HepG2 (cell line): ENCODE measurements at regions of chr7 and their contacts with region 1.

Region 1: GRCh38 chr7:130896898-130897514 is 163.0 kb upstream of the KLF14 start:
- DNase-seq: peak; percentile 52
- ATAC-seq: peak; percentile 49
- H3K4me3 ChIP-seq: no peak overlapping the region
- H3K27ac ChIP-seq: peak overlapping the region; percentile 15
- H3K4me1 ChIP-seq: peaks cover 95% of the 10 kb centered on the region
- H3K27me3 ChIP-seq: no peaks in the 10 kb centered on the region
- CTCF ChIP-seq: peak; percentile 88
- EP300 ChIP-seq: no peak
- POLR2A ChIP-seq: no peak
- RAD21 ChIP-seq: peak; percentile 92

Region 2: DNA sequence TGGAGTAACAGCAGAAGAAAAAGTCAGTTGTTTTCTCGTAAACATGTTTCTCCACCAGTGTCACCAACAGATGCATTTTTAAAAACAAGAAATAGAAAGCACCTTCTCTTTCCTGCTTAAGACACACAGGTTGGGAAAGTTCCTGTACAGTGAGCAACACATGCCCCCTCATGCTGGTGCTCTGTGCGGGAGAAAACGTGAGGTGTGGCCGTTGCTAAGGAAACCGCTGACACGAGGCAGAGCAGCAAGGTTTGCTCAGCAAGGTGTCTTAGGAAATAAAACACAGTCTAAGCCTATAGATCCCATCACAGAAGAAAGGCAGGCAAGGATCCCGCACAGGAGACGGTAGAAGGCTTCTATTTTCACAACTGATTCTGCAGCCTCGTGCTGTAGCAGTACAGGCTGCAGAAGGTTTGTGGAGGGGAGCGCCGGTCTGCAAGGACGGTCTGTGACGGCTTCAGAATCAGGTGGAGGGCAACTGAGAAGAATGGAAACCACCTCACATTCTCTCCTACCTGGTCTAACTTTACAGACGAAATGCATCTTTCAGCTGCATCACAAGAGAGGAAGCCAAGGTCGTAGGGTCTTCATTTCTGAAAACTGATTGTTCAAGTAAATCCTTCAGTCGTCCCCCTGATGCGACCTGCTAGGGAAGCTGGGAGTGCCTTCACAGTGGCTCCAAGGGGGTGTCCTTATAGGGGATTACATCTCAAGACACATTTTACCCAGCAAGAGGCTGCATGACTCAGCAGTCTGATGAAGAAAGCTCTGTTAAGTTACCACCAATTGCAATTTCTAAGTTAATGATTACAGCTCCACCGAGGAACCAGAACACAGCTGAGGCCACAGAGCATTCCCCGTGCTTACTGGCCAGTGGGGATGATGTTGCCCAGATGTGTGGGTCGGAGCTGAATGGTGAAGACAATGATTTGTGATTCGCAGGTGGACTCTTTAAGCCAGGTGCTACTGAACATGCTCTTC is 12.3 kb before region 1 on chr7:
- CTCF ChIA-PET with region 1: no interaction called
- POLR2A ChIA-PET with region 1: interaction called, 11 read pairs
- in situ Hi-C with region 1: no loop called
- intact Hi-C with region 1: no loop called
- DNase-seq: peak; percentile 55
- ATAC-seq: peak; percentile 82
- H3K4me3 ChIP-seq: no peak overlapping the region
- H3K27ac ChIP-seq: peak overlapping the region; percentile 60
- H3K4me1 ChIP-seq: peaks cover 81% of the 10 kb centered on the region
- H3K27me3 ChIP-seq: no peaks in the 10 kb centered on the region
- CTCF ChIP-seq: no peak
- EP300 ChIP-seq: 0 out of 4 replicates have a peak, but pooled peaks of 1 of the 2 experiments have one; percentile 23
- POLR2A ChIP-seq: peak; percentile 42 to 56; a peak in 3 of 4 replicates
- RAD21 ChIP-seq: no peak

Region 3: DNA sequence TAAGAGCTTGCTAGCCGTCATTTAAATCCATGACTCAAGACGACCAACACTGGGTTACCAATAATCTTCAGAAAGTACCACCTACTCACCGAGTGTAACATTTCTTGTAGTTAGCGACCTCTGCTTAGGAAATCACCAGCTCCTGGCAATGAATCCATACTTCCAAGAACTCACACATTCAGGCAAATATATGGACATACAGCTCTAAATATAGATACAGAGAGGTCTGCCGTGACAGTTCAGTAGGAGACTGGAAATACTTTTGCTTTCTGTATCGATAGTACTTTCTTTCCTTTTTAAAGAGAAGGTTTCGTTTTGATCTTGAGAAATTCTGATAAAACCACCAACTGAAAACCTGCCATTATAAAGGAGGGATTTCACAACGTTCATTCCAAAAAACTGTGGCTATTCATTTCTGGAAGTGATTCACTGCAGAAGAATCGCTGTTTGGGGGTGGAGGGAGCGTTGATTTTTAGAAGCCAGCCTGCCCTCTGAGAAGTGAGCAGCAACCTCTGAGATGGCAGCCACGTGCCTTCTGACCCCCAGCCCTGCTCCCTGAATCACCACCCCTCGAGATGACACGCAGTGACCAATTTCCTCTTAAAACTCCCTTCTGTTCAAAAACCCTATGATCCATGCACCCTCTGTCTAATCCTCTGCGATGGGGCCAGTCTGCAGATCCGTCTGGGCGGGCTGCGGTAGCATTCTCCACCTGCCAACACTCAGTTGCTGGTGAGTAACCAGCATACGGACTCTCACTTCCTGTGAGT is 16.0 kb after region 1 on chr7:
- CTCF ChIA-PET with region 1: interaction called, 3 read pairs
- POLR2A ChIA-PET with region 1: interaction called, 5 read pairs
- in situ Hi-C with region 1: no loop called
- intact Hi-C with region 1: loop called (anchors 2 kb)
- DNase-seq: peak; percentile 71
- ATAC-seq: peak; percentile 62
- H3K4me3 ChIP-seq: peak overlapping the region; percentile 54 to 72 (median 67)
- H3K27ac ChIP-seq: peak overlapping the region; percentile 94
- H3K4me1 ChIP-seq: peaks cover 93% of the 10 kb centered on the region
- H3K27me3 ChIP-seq: no peaks in the 10 kb centered on the region
- CTCF ChIP-seq: no peak
- EP300 ChIP-seq: peak in 1 of 2 experiments; percentile 36; a peak in 2 of 4 replicates
- POLR2A ChIP-seq: peak; percentile 43 to 59
- RAD21 ChIP-seq: 0 out of 2 replicates have a peak, but pooled peaks have one; percentile 12

Region 4: GRCh38 chr7:130921391-130922180 is 24.6 kb after region 1 on chr7:
- CTCF ChIA-PET with region 1: no interaction called
- POLR2A ChIA-PET with region 1: interaction called, 11 read pairs
- in situ Hi-C with region 1: no loop called
- intact Hi-C with region 1: no loop called
- DNase-seq: no peak
- ATAC-seq: no peak
- H3K4me3 ChIP-seq: peak overlapping the region in 1 of 3 experiments; percentile 21; a peak in 1 of 6 replicates
- H3K27ac ChIP-seq: peak overlapping the region; percentile 78
- H3K4me1 ChIP-seq: peaks cover 95% of the 10 kb centered on the region
- H3K27me3 ChIP-seq: no peaks in the 10 kb centered on the region
- CTCF ChIP-seq: no peak
- EP300 ChIP-seq: no peak
- POLR2A ChIP-seq: no peak
- RAD21 ChIP-seq: no peak

Region 5: DNA sequence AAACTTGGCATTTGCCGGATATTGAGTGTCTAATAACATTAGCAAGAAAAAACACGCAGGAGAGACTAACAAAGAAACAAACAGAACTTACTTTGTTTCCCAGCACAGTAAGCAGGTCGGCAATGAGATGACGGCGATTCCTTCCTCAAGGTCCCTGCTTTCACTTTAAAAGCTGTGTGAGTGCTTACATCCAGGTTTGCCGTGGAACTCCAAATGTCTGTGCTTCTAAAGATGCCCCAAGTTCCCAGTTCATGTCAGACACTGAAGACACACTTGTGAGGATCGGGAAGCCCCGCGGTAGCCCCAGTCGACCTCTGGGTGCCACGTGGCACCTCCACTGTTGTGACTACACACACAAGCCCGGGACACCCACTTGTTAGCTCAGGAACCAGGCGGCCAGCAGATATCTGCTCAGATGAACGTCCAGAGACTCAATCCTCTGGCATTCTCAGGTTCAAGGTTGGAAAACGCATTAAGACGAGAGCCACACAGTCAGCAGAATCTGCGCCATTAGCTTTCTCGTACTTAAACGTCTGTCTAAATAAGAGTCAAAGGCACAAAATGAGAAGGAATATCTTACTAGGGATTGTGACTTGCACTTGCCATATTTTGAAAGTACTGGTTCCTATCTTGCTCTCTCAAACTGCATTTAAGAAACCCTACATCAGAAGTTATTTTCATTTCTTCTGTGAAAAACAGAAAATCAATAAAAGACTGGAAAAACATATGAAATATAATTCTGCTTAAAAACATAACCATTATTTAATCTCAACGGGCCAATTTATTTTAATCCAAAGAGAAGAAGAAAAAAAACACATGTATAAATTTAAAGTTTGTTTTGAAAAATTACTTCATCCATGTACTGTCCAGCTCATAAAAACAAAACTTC is 44.6 kb after region 1 on chr7:
- CTCF ChIA-PET with region 1: no interaction called
- POLR2A ChIA-PET with region 1: interaction called, 7 read pairs
- in situ Hi-C with region 1: no loop called
- intact Hi-C with region 1: loop called (anchors 1 kb)
- DNase-seq: peak; percentile 75
- ATAC-seq: peak; percentile 91
- H3K4me3 ChIP-seq: peak overlapping the region; percentile 51 to 69 (median 68)
- H3K27ac ChIP-seq: peak overlapping the region; percentile 90
- H3K4me1 ChIP-seq: peaks cover 81% of the 10 kb centered on the region
- H3K27me3 ChIP-seq: no peaks in the 10 kb centered on the region
- CTCF ChIP-seq: no peak
- EP300 ChIP-seq: no peak; a peak in 1 of 4 replicates
- POLR2A ChIP-seq: peak; percentile 40 to 69; a peak in 3 of 4 replicates
- RAD21 ChIP-seq: no peak; the same call in 1 of the 2 replicates

Region 6: DNA sequence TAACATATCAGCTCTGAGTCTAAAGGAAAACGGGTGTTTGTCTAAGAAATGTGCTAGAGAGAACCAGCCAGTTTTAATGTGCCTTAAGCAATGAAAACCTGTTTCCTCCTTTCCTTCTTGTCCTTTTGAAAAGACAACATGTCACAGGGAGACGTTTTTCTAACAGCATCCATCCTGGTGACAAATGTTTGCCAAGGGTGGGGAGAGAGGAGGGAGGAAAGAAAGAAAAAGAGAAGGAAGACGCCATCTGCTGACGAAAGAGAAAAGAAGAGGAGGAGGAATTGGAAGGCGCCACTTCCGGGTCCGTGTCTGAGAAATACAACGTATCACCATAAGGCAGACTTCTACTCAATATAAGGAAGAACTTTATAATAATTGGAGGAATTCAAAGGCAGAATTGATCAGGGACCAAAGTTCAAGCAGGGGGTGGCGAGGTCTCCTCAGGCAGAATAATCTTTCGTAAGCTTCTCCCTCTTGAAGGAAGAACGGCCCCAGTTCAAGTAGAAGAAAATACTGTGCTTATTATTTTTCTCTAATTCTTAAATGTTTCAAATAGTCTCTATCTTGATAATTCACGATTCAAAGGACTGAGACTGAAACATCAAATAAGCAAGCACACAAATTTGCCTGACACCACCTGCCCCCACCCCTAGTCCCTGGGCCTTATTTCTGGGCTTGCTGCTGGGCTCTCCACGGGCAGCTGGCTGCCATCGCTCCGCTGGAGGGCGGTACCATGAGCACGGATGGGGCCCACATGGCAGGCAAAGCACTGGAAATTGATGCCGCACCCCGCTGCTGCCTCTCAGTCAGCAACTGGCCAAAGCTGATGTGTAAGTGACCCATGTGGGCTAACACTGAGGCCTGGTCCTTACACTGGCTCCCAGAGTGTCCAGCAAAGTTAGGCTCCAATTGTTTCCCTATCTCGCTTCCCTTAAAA is 110.7 kb after region 1 on chr7:
- CTCF ChIA-PET with region 1: interaction called, 6 read pairs
- POLR2A ChIA-PET with region 1: interaction called, 3 read pairs
- in situ Hi-C with region 1: no loop called
- intact Hi-C with region 1: loop called (anchors 1 kb)
- DNase-seq: peak; percentile 70
- ATAC-seq: peak; percentile 72
- H3K4me3 ChIP-seq: no peak overlapping the region
- H3K27ac ChIP-seq: no peak overlapping the region
- H3K4me1 ChIP-seq: peaks cover 20% of the 10 kb centered on the region; the same call in 1 of the 2 replicates
- H3K27me3 ChIP-seq: no peaks in the 10 kb centered on the region
- CTCF ChIP-seq: peak; percentile 69
- EP300 ChIP-seq: no peak
- POLR2A ChIP-seq: no peak
- RAD21 ChIP-seq: no peak

Region 7: GRCh38 chr7:131040467-131040932 is 143.5 kb after region 1 on chr7:
- CTCF ChIA-PET with region 1: interaction called, 6 read pairs
- POLR2A ChIA-PET with region 1: no interaction called
- in situ Hi-C with region 1: loop called (anchors 10 kb)
- intact Hi-C with region 1: loop called (anchors 2 kb)
- DNase-seq: peak; percentile 57
- ATAC-seq: peak; percentile 75
- H3K4me3 ChIP-seq: no peak overlapping the region
- H3K27ac ChIP-seq: no peak overlapping the region
- H3K4me1 ChIP-seq: peaks cover 15% of the 10 kb centered on the region
- H3K27me3 ChIP-seq: no peaks in the 10 kb centered on the region
- CTCF ChIP-seq: peak; percentile 82
- EP300 ChIP-seq: no peak
- POLR2A ChIP-seq: no peak
- RAD21 ChIP-seq: peak; percentile 65

Region 8: GRCh38 chr7:131231381-131232220 is 334.6 kb after region 1 on chr7:
- CTCF ChIA-PET with region 1: no interaction called
- POLR2A ChIA-PET with region 1: no interaction called
- in situ Hi-C with region 1: no loop called
- intact Hi-C with region 1: no loop called
- DNase-seq: no peak
- ATAC-seq: no peak
- H3K4me3 ChIP-seq: no peak overlapping the region
- H3K27ac ChIP-seq: no peak overlapping the region
- H3K4me1 ChIP-seq: peaks cover 16% of the 10 kb centered on the region
- H3K27me3 ChIP-seq: 0 out of 5 replicates have a peak, but pooled peaks cover 0 to 5% of the 10 kb centered on the region in 2 experiments
- CTCF ChIP-seq: no peak
- EP300 ChIP-seq: no peak
- POLR2A ChIP-seq: no peak
- RAD21 ChIP-seq: no peak